GM12878 (cell line): ENCODE measurements at regions of chr10 and their contacts with region 1.

Region 1: GRCh38 chr10:91006001-91006751 is 85.3 kb upstream of the ANKRD1 start:
- DNase-seq: peak; percentile 80
- ATAC-seq: peak; percentile 80
- H3K4me3 ChIP-seq: peak overlapping the region; percentile 29; the same call in 1 of the 2 replicates
- H3K27ac ChIP-seq: peak overlapping the region; percentile 71
- H3K4me1 ChIP-seq: peaks cover 46% of the 10 kb centered on the region
- H3K27me3 ChIP-seq: no peaks in the 10 kb centered on the region
- CTCF ChIP-seq: peak; percentile 89 to 97 (median 93)
- EP300 ChIP-seq: 0 out of 4 replicates have a peak, but pooled peaks of 1 of the 2 experiments have one; percentile 20
- POLR2A ChIP-seq: no peak
- RAD21 ChIP-seq: peak; percentile 96

Region 2: GRCh38 chr10:90977162-90977854 is 28.9 kb before region 1 on chr10:
- CTCF ChIA-PET with region 1: interaction called, 13 read pairs
- POLR2A ChIA-PET with region 1: no interaction called
- RAD21 ChIA-PET with region 1: interaction called, 8 read pairs
- SMC1A ChIA-PET with region 1: interaction called, 26 read pairs
- in situ Hi-C with region 1: no loop called
- intact Hi-C with region 1: no loop called
- DNase-seq: peak; percentile 76
- ATAC-seq: peak; percentile 91
- H3K4me3 ChIP-seq: no peak overlapping the region
- H3K27ac ChIP-seq: peak overlapping the region; percentile 74
- H3K4me1 ChIP-seq: peaks cover 10% of the 10 kb centered on the region
- H3K27me3 ChIP-seq: no peaks in the 10 kb centered on the region
- CTCF ChIP-seq: no peak
- EP300 ChIP-seq: no peak
- POLR2A ChIP-seq: no peak
- RAD21 ChIP-seq: no peak

Region 3: DNA sequence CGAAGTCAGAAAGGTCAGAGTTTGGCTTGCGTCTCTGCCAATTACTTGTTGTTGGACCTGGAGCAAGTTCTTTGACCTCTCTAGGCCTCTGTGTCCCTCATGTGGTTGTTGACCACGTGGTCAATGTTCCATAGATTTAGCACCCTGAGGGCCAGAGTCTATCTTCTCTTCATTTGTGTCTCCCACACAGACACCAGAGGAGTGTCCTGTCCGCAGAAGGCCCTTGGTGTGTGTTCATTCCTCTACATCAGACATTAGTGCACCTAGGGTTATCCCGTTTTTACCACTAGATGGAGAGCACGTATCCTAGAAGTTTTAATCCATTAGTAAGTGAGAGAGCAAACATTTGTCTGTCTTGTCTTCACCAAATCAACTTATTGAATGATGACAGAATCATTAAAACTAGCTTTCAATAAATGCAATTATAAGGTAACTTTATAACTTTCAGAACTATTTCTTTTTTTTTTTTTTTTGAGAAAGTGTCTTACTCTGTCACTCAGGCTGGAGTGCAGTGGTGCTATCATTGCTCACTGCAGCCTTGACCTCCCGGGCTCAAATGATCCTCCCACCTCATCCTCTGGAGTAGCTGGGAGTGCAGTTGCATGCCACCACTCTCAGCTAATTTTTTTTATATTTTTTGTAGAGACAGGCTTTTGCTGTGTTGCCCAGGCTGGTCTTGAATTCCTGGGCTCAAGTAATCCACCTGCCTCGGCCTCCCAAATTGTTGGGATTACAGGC is 37.2 kb after region 1 on chr10:
- CTCF ChIA-PET with region 1: interaction called, 10 read pairs
- POLR2A ChIA-PET with region 1: no interaction called
- RAD21 ChIA-PET with region 1: interaction called, 5 read pairs
- SMC1A ChIA-PET with region 1: interaction called, 4 read pairs
- in situ Hi-C with region 1: no loop called
- intact Hi-C with region 1: no loop called
- DNase-seq: peak; percentile 3
- ATAC-seq: peak; percentile 66
- H3K4me3 ChIP-seq: no peak overlapping the region
- H3K27ac ChIP-seq: no peak overlapping the region
- H3K4me1 ChIP-seq: peaks cover under 1% of the 10 kb centered on the region; the same call in 1 of the 2 replicates
- H3K27me3 ChIP-seq: no peaks in the 10 kb centered on the region
- CTCF ChIP-seq: peak; percentile 18 to 51 (median 28); a peak in 3 of 6 replicates
- EP300 ChIP-seq: no peak
- POLR2A ChIP-seq: no peak
- RAD21 ChIP-seq: peak; percentile 50

Region 4: DNA sequence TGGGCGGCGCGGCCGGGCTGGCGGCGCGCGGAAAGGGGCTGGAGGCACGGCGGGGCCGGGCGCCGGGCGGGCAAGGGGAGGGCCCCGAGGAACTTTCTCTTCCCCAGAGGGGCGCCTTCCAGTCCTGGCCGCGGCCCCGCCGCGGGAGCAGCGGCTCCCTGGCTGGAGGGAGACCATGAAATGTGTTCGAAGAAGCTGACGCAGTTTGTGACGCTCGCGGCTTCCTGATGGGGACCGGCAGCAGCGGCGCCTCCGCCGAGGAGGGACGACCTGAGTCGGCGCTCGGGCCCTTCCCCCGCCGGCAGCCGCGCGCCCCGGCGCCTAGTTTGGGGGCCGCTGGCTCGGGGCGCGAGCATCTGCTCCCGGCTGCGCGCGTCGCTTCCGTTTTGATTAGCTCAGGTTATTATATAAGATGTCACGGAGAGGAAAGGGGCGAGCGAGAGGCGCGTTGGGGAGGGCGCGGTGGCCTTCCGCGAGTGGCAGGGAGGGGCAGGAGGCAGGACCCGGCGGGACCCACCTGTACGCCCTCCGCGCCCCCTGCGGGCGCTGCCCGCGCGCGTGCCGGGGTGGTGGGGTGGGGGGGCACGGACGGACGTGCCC is 157.2 kb after region 1 on chr10:
- CTCF ChIA-PET with region 1: interaction called, 11 read pairs
- POLR2A ChIA-PET with region 1: no interaction called
- RAD21 ChIA-PET with region 1: interaction called, 6 read pairs
- SMC1A ChIA-PET with region 1: interaction called, 10 read pairs
- in situ Hi-C with region 1: no loop called
- intact Hi-C with region 1: loop called (anchors 1 kb)
- DNase-seq: no peak
- ATAC-seq: peak; percentile 74
- H3K4me3 ChIP-seq: peak overlapping the region; percentile 84
- H3K27ac ChIP-seq: peak overlapping the region; percentile 79
- H3K4me1 ChIP-seq: peaks cover 14% of the 10 kb centered on the region; the same call in 1 of the 2 replicates
- H3K27me3 ChIP-seq: no peaks in the 10 kb centered on the region
- CTCF ChIP-seq: no peak
- EP300 ChIP-seq: 0 out of 4 replicates have a peak, but pooled peaks of 1 of the 2 experiments have one; percentile 30
- POLR2A ChIP-seq: peak; percentile 87
- RAD21 ChIP-seq: no peak; the same call in 1 of the 2 replicates

Region 5: DNA sequence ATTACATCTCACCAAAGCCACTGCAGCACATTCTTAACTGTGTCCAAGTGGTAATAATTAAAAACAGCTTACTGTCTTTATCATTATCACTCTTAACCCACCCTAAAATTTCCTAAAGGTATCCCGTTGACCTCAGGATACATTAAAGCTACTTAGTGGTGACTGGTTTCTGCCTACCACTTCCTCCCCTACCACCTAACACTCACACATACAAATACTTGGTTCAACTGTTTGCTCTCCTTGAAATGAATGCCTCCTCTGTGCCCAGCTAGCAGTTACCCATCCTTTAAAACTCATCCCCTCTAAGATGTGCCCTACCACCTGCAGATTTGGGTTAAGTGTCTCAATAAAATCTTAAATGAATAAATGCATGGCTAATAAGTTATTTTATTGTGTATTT is 221.4 kb after region 1 on chr10:
- CTCF ChIA-PET with region 1: interaction called, 30 read pairs
- POLR2A ChIA-PET with region 1: no interaction called
- RAD21 ChIA-PET with region 1: interaction called, 5 read pairs
- SMC1A ChIA-PET with region 1: interaction called, 31 read pairs
- in situ Hi-C with region 1: no loop called
- intact Hi-C with region 1: no loop called
- DNase-seq: no peak
- ATAC-seq: peak; percentile 71
- H3K4me3 ChIP-seq: no peak overlapping the region
- H3K27ac ChIP-seq: no peak overlapping the region
- H3K4me1 ChIP-seq: peaks cover 8% of the 10 kb centered on the region
- H3K27me3 ChIP-seq: no peaks in the 10 kb centered on the region
- CTCF ChIP-seq: no peak
- EP300 ChIP-seq: no peak
- POLR2A ChIP-seq: no peak
- RAD21 ChIP-seq: no peak

Region 6: GRCh38 chr10:91409869-91410637 is 403.9 kb after region 1 on chr10 and contains the start of gene HECTD2:
- CTCF ChIA-PET with region 1: interaction called, 3 read pairs
- POLR2A ChIA-PET with region 1: no interaction called
- RAD21 ChIA-PET with region 1: no interaction called
- SMC1A ChIA-PET with region 1: no interaction called
- in situ Hi-C with region 1: no loop called
- intact Hi-C with region 1: loop called (anchors 10 kb)
- DNase-seq: no peak
- ATAC-seq: peak; percentile 89
- H3K4me3 ChIP-seq: peak within 1 kb of the TSS; percentile 85
- H3K27ac ChIP-seq: peak within 1 kb of the TSS; percentile 81
- H3K4me1 ChIP-seq: no peaks in the 10 kb centered on the region
- H3K27me3 ChIP-seq: no peaks in the 10 kb centered on the region
- CTCF ChIP-seq: peak; percentile 11 to 55 (median 27); a peak in 3 of 6 replicates
- EP300 ChIP-seq: no peak
- POLR2A ChIP-seq: peak; percentile 80
- RAD21 ChIP-seq: peak; percentile 20; the same call in 1 of the 2 replicates
- polyA plus RNA-seq, gene HECTD2: 1.2 TPM